ENCODE measurements at regions of chr1 and their contacts with region 1.

Region 1: DNA sequence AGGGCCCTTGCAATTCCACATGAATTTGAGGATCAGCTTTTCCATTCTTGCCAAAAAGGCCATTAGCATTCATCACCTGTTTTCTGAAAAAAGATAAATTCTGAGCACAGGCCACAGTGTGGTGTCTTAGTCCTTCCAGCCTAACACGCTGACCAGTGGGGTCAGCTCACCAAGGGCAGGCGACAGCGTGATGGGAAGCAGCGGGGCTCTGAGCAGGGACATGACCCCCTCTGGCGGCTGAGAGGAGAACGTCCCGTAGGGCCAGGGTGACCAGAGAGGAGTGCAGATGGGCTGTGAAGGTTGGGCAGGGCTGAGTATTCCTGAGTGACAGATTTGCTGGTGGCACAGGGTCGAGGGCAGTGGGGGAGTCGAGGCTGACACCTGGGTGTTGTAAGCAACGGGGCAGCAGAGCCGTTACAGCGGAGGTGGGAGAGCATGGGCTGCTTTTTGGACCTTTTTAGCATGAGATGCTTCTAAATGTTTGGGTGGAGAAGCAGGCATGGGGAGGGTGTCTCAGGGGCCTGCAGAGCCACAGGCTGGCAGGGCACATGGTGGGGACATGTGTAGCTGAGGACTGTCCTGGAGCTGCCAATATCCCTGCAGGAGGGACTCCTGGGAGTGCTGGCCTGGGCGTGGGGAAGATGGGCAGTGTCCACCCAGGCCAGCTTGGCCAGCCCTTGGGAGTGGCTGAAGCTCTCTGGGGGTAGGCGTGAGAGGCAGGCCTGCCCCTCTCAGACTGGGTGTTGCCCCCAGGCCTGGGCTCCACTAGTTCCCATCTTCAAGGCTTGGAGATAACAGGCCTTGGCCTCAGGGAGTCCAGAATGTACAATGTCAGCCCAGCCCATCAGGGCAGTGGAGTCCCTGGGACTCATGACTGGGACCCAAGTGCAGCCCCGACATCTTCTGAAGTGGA is 8.6 kb upstream of the CALML6 start:
- DNase-seq: peak; percentile 89 to 93
- H3K4me3 ChIP-seq: no peak overlapping the region
- H3K27ac ChIP-seq: peak overlapping the region in 3 of 5 donors; percentile 4 to 23 (median 9)
- H3K4me1 ChIP-seq: peaks cover 26 to 39% (median 37%) of the 10 kb centered on the region in 4 donors
- H3K27me3 ChIP-seq: peaks cover 0 to 5% (median 0%) of the 10 kb centered on the region in 3 donors
- CTCF ChIP-seq: peak in 5 of 7 experiments; percentile 83 to 97 (median 91)
- EP300 ChIP-seq: no peak
- POLR2A ChIP-seq: no peak

Region 2: DNA sequence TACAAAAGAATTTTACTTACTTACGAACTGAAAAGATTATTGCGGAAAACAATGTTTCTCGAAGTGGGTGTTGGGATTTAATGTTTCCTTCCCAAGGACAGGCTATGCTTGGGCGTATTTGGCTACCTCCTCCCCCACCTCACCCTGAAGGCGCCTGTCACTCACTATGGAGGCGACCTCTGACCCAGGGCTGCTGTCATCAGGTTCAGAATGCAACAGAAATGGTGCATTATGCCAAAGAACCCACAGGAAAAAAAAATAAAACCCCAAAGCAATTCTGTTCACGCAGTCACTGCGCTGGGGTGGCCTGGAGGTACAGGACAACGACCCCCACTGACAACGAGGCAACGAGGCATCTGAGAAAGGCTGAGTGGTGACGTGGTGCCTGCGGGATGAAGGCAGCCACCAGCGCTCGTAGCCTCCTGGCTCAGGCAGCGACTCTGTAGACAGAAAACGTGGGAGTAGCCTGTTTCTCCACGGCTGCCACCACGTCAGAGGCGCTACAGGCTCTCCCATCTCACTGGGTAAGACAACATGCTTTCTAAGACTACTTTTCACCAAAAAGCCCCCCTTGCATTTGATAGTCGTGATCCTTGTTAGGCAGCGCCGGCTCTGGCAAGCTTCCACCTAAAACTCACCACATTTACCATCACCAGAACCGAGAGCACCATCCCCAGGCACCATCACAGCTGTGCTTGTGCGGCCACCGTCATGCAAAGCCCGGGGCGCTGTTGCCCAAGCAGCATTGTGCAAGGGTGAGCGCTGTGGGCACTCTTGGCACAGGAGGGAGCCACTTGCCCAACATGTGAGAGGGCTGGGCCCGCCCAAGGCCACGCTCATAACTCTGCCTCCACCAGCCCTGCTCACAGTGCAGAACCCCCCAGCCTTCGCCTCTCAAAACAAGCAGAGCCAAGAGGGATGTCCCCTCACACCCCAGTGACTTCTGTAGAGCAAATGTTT is 142.5 kb before region 1 on chr1:
- intact Hi-C with region 1: loop called (anchors 10 kb)
- DNase-seq: peak in 1 of 2 donors; percentile 52
- H3K4me3 ChIP-seq: no peak overlapping the region
- H3K27ac ChIP-seq: no peak overlapping the region
- H3K4me1 ChIP-seq: peaks cover 10 to 19% (median 14%) of the 10 kb centered on the region in 4 donors
- H3K27me3 ChIP-seq: no peaks in the 10 kb centered on the region
- CTCF ChIP-seq: no peak
- EP300 ChIP-seq: no peak
- POLR2A ChIP-seq: no peak

Region 3: GRCh38 chr1:1833916-1834325 is 72.5 kb before region 1 on chr1:
- intact Hi-C with region 1: no loop called
- DNase-seq: no peak
- H3K4me3 ChIP-seq: no peak overlapping the region
- H3K27ac ChIP-seq: no peak overlapping the region
- H3K4me1 ChIP-seq: peaks cover 11 to 38% (median 19%) of the 10 kb centered on the region in 4 donors
- H3K27me3 ChIP-seq: no peaks in the 10 kb centered on the region
- CTCF ChIP-seq: no peak
- EP300 ChIP-seq: no peak
- POLR2A ChIP-seq: no peak

Region 4: DNA sequence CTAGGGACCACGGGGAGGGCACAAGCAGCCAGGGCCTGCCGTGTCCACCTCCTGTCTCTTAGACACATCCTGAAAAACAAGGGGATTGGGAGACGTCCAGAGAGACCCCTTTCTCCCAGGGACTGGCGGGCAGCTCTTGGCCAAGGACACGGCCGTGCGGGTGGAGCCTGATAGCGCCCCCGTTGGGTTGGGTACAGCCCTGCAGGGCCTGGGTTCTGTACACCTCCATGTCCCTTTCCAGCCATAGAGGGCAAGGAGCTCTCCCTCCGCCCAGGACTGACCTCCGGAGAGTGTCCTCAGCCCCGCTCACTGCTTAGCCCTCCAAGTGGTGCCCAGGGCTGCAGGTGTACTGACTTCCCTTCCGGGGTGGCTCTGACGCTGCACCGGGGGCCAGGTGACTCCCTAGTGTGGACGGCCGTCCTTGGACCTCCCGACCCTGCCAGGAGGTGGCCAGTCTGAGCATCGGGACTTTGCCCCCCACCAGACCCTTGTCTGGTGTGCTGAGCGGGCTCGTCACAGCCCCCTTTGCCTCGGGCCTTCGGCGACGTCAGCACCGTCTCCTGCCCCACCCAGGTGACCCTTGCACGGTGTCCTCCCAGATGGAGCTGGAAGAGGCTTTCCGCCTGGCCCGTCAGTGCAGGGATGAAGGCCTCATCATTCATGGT is 149.6 kb after region 1 on chr1:
- intact Hi-C with region 1: no loop called
- DNase-seq: no peak
- H3K4me3 ChIP-seq: no peak overlapping the region
- H3K27ac ChIP-seq: no peak overlapping the region
- H3K4me1 ChIP-seq: peaks cover 0 to 17% (median 11%) of the 10 kb centered on the region in 4 donors
- H3K27me3 ChIP-seq: peaks cover 0 to 10% (median 0%) of the 10 kb centered on the region in 3 donors
- CTCF ChIP-seq: no peak
- EP300 ChIP-seq: no peak
- POLR2A ChIP-seq: no peak

Measured in stomach (tissue), 19 donors.